Posterior vena cava (tissue), 2 donors: ENCODE measurements at regions of chr20 and their contacts with region 1.

Region 1: DNA sequence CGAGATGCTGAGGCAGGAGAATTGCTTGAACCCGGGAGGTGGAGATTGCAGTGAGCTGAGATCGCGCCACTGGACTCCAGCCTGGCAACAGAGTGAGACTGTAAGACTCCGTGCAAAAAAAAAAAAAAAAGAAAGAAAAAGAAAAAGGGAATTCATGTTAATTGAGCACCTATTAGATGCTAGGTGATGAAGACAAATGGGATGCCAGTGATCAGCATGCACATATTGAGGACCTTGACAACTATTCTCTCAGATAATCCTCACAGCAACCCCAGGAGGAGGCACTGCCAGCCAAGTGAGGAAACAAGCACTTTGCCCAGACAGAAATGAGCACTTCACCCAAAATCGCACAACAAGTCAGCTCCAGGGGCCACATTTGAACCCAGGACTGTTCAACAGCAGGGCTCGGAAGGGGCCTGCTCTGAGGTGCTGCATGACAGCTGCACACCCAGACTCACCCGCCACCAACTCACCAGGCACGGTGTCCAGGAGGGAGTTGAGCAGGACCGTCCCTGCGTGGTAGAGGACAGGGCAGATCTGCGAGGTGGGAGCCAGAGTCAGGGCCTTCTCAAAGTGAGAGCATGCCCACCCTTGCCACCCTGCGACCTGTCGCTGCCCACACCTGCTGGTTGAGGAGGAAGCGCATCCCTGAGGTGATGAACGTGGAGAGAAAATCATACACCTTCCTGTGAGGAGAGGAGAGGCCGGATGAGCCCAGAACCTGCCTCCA is 4.6 kb downstream of the PLTP start:
- DNase-seq: no peak

Region 2: DNA sequence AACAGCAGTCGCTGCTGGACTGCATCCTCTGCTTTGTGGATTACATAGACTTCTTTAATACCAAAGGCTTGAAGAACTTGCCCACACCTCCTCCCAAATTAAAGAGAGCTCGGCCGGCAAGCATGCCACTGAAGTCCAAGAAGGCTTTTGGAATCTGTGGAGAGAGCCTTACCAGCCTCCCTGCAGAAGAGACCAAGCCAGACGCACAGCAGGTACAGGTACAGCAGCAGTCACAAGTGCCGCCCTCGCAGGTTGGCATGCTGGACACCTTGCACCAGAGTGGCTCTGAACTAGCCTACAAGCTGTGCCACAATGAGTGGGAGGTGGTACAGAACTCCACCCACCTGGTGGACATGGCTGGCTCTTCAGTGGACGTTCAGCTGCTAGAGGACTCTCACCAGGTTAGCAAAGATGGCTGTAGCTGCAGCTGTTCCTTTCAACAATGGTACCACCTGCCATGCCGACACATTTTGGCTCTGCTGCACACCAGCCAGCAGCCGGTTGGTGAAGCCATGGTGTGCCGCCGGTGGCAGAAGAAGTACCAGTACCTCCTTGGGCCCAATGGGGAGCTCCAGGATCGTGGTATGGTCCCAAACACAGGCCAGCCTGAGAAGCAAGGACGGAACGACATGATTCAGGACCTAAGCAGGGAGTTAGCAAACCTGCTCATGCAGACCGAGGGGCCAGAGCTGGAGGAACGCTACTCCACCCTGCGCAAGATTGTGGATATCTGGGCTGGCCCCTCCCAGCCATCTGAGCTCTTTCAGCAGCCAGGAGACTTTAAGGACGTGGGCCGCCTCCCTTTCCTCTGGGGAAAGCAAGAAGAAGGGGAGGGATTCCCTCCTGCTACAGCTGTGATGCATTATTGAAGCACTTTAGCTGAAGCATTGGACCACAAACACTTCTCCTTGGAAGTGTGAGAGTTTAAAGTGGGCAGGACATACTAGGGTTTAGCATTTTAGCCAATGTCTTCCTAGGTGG is 29.3 kb before region 1 on chr20:
- intact Hi-C with region 1: loop called in 1 of 2 experiments (anchors 1 kb)
- DNase-seq: peak; percentile 82